ENCODE measurements at regions of chr2 and their contacts with region 1.

Region 1: DNA sequence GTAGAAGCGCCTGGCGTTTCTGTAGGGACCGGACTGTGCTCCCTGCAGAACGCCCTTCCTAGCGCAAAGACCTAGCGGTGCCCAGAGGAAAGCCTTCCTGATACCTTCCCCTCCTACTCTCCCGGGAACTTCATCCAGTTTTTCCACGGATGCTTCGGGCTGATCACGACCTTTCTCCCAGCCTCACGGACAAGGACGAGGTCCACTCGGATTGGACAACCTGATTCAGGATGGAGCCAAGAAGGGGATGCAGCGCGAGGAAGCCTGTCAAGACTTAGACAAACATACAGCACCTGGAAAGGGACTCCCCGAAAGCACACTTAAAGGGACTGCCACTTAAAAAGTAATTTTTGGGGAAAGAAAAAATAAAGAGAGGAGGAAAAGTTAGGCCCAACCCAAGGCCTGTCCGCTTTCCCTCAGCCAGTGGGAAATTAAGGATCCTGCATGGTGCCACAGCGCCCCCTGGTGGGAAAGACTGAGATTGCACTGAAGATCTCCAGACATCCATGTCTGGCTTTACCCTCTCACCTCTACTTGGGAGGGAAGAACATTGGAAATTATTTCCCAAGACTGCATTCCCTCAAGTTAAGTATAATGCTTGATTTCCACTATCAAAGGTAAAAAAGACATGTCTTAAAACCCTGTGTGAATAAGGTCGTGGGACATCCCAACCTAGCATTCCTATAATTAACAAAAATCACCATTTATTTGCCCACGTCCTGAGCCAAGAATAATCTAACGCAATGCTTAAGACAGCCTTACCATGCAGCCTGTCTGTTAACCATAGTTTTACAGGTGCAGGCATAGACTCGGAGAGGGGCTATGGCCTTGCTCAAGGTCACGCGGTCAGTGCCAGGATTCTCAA is 13.4 kb upstream of the COPS8 start:
- DNase-seq: peak; percentile 28 to 76 (median 51)
- ATAC-seq: peak; percentile 72
- H3K4me3 ChIP-seq: no peak overlapping the region
- H3K4me3 Mint-ChIP-seq: no peak overlapping the region
- H3K27ac ChIP-seq: no peak overlapping the region
- H3K27ac Mint-ChIP-seq: peak overlapping the region in 1 of 9 donors; percentile 25
- H3K4me1 ChIP-seq: no peaks in the 10 kb centered on the region
- H3K4me1 Mint-ChIP-seq: peaks cover 0 to 2% (median 0%) of the 10 kb centered on the region in 7 donors
- H3K27me3 ChIP-seq: no peaks in the 10 kb centered on the region
- H3K27me3 Mint-ChIP-seq: peaks cover 0 to 2% (median 0%) of the 10 kb centered on the region in 5 donors

Region 2: GRCh38 chr2:235766278-235766677 is 1306.0 kb before region 1 on chr2:
- CTCF ChIA-PET with region 1: no interaction called
- POLR2A ChIA-PET with region 1: no interaction called
- intact Hi-C with region 1: loop called (anchors 1 to 10 kb)
- DNase-seq: peak in 7 of 9 donors; percentile 29 to 57 (median 38)
- ATAC-seq: peak; percentile 74
- H3K4me3 ChIP-seq: no peak overlapping the region
- H3K4me3 Mint-ChIP-seq: no peak overlapping the region
- H3K27ac ChIP-seq: no peak overlapping the region
- H3K27ac Mint-ChIP-seq: no peak overlapping the region
- H3K4me1 ChIP-seq: no peaks in the 10 kb centered on the region
- H3K4me1 Mint-ChIP-seq: peaks cover 0 to 4% (median 0%) of the 10 kb centered on the region in 7 donors
- H3K27me3 ChIP-seq: no peaks in the 10 kb centered on the region
- H3K27me3 Mint-ChIP-seq: peaks cover 0 to 13% (median 5%) of the 10 kb centered on the region in 5 donors

Region 3: GRCh38 chr2:236343400-236344161 is 728.7 kb before region 1 on chr2:
- CTCF ChIA-PET with region 1: interaction called, 4 read pairs
- POLR2A ChIA-PET with region 1: no interaction called
- intact Hi-C with region 1: loop called (anchors 1 kb)
- DNase-seq: peak in 7 of 9 donors; percentile 26 to 60 (median 50)
- ATAC-seq: peak; percentile 50
- H3K4me3 ChIP-seq: no peak overlapping the region
- H3K4me3 Mint-ChIP-seq: no peak overlapping the region
- H3K27ac ChIP-seq: no peak overlapping the region
- H3K27ac Mint-ChIP-seq: no peak overlapping the region
- H3K4me1 ChIP-seq: no peaks in the 10 kb centered on the region
- H3K4me1 Mint-ChIP-seq: no peaks in the 10 kb centered on the region
- H3K27me3 ChIP-seq: no peaks in the 10 kb centered on the region
- H3K27me3 Mint-ChIP-seq: peaks cover 0 to 6% (median 5%) of the 10 kb centered on the region in 5 donors

Region 4: DNA sequence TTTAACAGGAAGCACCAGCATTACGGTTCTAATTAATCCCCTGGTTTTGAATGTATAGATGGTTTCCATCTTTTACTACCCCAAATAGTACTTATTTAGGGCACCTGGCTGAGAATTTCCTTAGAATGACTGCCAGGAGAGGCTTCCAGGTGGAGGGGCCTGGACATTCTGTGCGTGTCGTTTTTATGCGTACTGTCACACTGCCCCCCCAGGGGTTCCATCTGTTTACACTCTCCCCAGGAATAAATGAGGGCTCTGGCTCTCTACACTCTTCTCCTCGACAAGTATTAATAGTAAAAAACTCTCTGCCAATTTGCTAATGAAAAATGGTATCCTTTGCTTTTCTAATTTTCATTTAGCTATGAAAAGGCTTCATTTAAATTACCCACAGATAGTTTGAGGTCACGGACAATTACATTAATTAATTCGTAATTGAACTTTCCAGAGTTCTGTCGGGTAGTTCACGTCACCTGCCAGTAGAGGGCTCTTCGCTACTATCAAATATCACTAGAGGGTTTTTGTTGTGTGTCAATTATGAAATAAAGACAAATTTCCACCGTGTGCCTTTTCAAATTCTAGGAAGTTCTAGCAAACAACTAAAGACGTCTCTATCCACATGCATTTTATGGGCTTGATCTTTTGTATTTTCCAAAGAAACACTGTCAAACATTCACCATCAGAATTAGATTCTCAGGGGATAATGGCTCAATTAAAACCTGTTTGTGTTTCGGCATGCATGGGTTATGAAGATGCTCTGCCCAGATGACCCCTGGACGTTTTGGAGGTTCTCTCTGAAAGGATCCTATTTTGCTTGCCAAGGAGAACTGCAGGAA is 719.3 kb before region 1 on chr2:
- CTCF ChIA-PET with region 1: interaction called, 4 read pairs
- POLR2A ChIA-PET with region 1: no interaction called
- intact Hi-C with region 1: loop called (anchors 1 kb)
- DNase-seq: peak in 5 of 9 donors; percentile 29 to 48 (median 45)
- ATAC-seq: peak; percentile 50
- H3K4me3 ChIP-seq: no peak overlapping the region
- H3K4me3 Mint-ChIP-seq: no peak overlapping the region
- H3K27ac ChIP-seq: no peak overlapping the region
- H3K27ac Mint-ChIP-seq: peak overlapping the region in 1 of 9 donors; percentile 59
- H3K4me1 ChIP-seq: no peaks in the 10 kb centered on the region
- H3K4me1 Mint-ChIP-seq: peaks cover 0 to 7% (median 4%) of the 10 kb centered on the region in 7 donors
- H3K27me3 ChIP-seq: no peaks in the 10 kb centered on the region
- H3K27me3 Mint-ChIP-seq: peaks cover 0 to 14% (median 8%) of the 10 kb centered on the region in 5 donors

Region 5: DNA sequence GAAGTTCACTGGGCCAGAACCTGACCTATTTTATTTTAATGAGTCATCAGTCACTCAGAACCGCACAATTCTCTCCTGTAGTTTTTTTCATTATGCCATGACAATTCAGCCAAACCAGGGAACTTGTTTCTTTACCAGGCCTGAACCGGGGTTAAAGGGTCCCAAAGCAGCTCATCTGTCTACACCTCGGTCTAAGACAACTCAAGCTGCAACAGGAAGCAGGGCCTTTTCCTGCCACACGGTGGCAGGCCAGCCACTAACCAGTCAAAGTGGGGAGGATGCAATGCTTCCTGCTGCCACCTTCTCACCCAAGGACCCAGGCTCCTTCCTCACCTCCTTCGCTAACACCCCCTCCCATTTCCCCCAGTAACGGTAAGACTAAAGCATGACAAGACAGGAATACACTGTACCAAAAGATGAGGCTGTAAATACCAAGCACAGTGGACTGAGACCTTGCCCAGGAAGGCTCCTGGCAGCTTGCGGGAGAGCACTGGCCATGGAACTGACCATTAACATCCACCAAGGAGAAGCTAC is 559.3 kb before region 1 on chr2:
- CTCF ChIA-PET with region 1: no interaction called
- POLR2A ChIA-PET with region 1: no interaction called
- intact Hi-C with region 1: loop called (anchors 1 to 5 kb)
- DNase-seq: peak; percentile 44 to 74 (median 63)
- ATAC-seq: peak; percentile 94
- H3K4me3 ChIP-seq: no peak overlapping the region
- H3K4me3 Mint-ChIP-seq: no peak overlapping the region
- H3K27ac ChIP-seq: no peak overlapping the region
- H3K27ac Mint-ChIP-seq: no peak overlapping the region
- H3K4me1 ChIP-seq: peaks cover 4% of the 10 kb centered on the region in 2 donors
- H3K4me1 Mint-ChIP-seq: peaks cover 0 to 5% (median 0%) of the 10 kb centered on the region in 7 donors
- H3K27me3 ChIP-seq: no peaks in the 10 kb centered on the region
- H3K27me3 Mint-ChIP-seq: peaks cover 0 to 36% (median 0%) of the 10 kb centered on the region in 5 donors

Region 6: DNA sequence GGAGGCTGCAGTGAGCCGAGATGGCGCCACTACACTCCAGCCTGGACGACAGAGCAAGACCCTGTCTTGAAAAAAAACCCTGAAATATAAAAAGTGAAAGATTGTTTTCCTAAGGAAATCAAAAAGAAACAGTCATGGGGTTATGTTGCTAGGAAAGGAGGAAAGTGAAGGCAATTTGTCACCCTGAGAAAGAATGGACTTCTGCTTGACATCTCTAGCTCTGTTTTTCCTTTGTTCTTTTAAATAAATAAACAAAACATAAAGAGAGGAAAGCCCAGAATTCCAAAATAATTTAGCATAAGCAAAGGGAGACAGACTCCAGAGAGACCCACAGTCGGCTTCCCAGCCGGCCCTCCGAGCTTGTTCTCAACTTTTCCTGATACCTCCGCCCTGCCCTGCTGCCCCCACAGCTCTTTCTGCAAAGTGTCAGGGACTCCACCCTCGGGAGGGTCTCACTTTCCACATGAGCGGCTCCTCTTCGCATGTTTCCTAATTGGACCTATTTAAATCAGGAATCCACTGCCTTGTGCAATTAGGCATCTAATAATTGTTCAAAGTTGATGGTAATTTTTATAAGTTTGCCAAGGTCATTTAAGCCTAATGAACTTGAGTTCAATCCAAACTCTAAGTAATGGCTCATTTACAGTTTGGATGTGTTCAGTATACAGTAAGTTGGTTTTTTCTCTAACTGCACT is 36.4 kb before region 1 on chr2:
- CTCF ChIA-PET with region 1: no interaction called
- POLR2A ChIA-PET with region 1: no interaction called
- intact Hi-C with region 1: no loop called
- DNase-seq: no peak
- ATAC-seq: no peak
- H3K4me3 ChIP-seq: no peak overlapping the region
- H3K4me3 Mint-ChIP-seq: no peak overlapping the region
- H3K27ac ChIP-seq: no peak overlapping the region
- H3K27ac Mint-ChIP-seq: no peak overlapping the region
- H3K4me1 ChIP-seq: no peaks in the 10 kb centered on the region
- H3K4me1 Mint-ChIP-seq: no peaks in the 10 kb centered on the region
- H3K27me3 ChIP-seq: no peaks in the 10 kb centered on the region
- H3K27me3 Mint-ChIP-seq: peaks cover 0 to 5% (median 0%) of the 10 kb centered on the region in 5 donors

Region 7: GRCh38 chr2:237085248-237086221 is 13.2 kb after region 1 on chr2 and contains the start of gene COPS8:
- CTCF ChIA-PET with region 1: interaction called, 13 read pairs
- POLR2A ChIA-PET with region 1: no interaction called
- intact Hi-C with region 1: no loop called
- DNase-seq: peak; percentile 82 to 93 (median 89)
- ATAC-seq: peak; percentile 99
- H3K4me3 ChIP-seq: peak within 1 kb of the TSS; percentile 95
- H3K4me3 Mint-ChIP-seq: peak within 1 kb of the TSS; percentile 95 to 100 (median 99)
- H3K27ac ChIP-seq: peak within 1 kb of the TSS; percentile 83
- H3K27ac Mint-ChIP-seq: peak within 1 kb of the TSS; percentile 94 to 99 (median 99)
- H3K4me1 ChIP-seq: peaks cover 8 to 15% of the 10 kb centered on the region in 2 donors
- H3K4me1 Mint-ChIP-seq: peaks cover 23 to 52% (median 28%) of the 10 kb centered on the region in 7 donors
- H3K27me3 ChIP-seq: no peaks in the 10 kb centered on the region
- H3K27me3 Mint-ChIP-seq: no peaks in the 10 kb centered on the region
- total RNA-seq, gene COPS8: 31.2 to 46.4 (median 40.8) TPM

Measured in naive thymus-derived CD4-positive, alpha-beta T cell (primary cell).